Esophagus muscularis mucosa (tissue), 4 donors: ENCODE measurements at regions of chrX and their contacts with region 1.

Region 1: DNA sequence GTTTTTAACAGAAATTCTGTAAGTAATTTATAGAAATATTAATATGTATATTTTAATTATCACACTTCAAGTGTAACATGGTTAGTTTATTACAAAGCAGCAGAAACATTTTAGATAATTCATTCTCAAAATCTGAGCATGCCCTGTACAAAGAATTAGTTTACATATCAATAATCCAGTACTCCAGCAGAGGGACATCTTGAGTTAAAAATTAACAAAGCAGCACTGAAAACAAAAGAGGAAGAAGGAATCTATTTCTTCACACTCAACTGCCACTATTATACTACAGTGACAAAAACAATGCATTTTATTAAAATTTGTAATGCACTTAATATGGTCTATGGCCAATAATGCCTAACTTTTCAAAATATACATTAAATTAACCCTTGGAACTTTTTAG is 179.1 kb upstream of the KLHL4 start:
- DNase-seq: no peak
- H3K4me3 ChIP-seq: no peak overlapping the region
- H3K27ac ChIP-seq: no peak overlapping the region
- H3K4me1 ChIP-seq: no peaks in the 10 kb centered on the region
- H3K27me3 ChIP-seq: no peaks in the 10 kb centered on the region
- CTCF ChIP-seq: peak; percentile 34 to 40 (median 40)
- EP300 ChIP-seq: no peak
- POLR2A ChIP-seq: no peak

Region 2: GRCh38 chrX:87664381-87664780 is 325.9 kb after region 1 on chrX:
- intact Hi-C with region 1: loop called (anchors 5 kb)
- DNase-seq: no peak
- H3K4me3 ChIP-seq: no peak overlapping the region
- H3K27ac ChIP-seq: no peak overlapping the region
- H3K4me1 ChIP-seq: no peaks in the 10 kb centered on the region
- H3K27me3 ChIP-seq: no peaks in the 10 kb centered on the region
- CTCF ChIP-seq: peak; percentile 36 to 47 (median 45)
- EP300 ChIP-seq: no peak
- POLR2A ChIP-seq: no peak